Kidney (tissue), 22 donors: ENCODE measurements at regions of chr16 and their contacts with region 1.

Region 1: GRCh38 chr16:48156790-48157209 is 1.0 kb upstream of the ABCC12 start:
- DNase-seq: peak; percentile 76 to 91 (median 87)
- H3K4me3 ChIP-seq: no peak overlapping the region
- H3K27ac ChIP-seq: no peak overlapping the region
- H3K4me1 ChIP-seq: no peaks in the 10 kb centered on the region
- H3K27me3 ChIP-seq: peaks cover 2% of the 10 kb centered on the region
- CTCF ChIP-seq: peak; percentile 83

Region 2: GRCh38 chr16:47037746-47038458 is 1118.9 kb before region 1 on chr16:
- intact Hi-C with region 1: loop called (anchors 10 kb)
- DNase-seq: peak; percentile 86 to 94 (median 91)
- H3K4me3 ChIP-seq: peak overlapping the region; percentile 57 to 79 (median 67)
- H3K27ac ChIP-seq: no peak overlapping the region
- H3K4me1 ChIP-seq: peaks cover 0 to 2% (median 0%) of the 10 kb centered on the region in 3 donors
- H3K27me3 ChIP-seq: no peaks in the 10 kb centered on the region
- CTCF ChIP-seq: peak; percentile 89

Region 3: DNA sequence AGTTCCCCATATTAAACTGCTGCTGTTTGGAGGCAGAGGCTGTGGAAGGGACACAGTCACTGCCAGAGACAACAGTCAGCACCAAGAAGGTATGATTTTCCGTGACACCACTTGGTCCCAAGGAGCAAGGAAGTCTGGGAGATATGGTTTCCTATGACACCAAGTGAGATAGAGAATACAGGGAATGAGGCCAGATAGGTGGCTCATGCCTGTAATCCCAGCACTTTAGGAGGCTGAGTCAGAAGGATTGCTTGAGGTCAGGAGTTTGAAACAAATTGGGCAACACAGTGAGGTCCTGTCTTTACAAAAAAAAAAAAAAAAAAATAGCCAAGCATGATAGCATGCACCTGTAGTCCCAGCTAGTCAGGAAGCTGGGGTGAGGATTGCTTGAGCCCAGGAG is 91.8 kb before region 1 on chr16:
- intact Hi-C with region 1: no loop called
- DNase-seq: no peak
- H3K4me3 ChIP-seq: no peak overlapping the region
- H3K27ac ChIP-seq: no peak overlapping the region
- H3K4me1 ChIP-seq: no peaks in the 10 kb centered on the region
- H3K27me3 ChIP-seq: no peaks in the 10 kb centered on the region
- CTCF ChIP-seq: no peak